Activated T-helper 1 cell treated with anti-CD3 and anti-CD28 coated beads, Interleukin-12 subunit alpha, Interleukin-12 subunit beta, Interleukin-2, Interleukin-4 antibody, amounts not matched to agents 30 ng/mL and 10 ng/mL and 1 ng/mL, durations not matched to agents 14 hours and 24 hours and 36 hours (primary cell): ENCODE measurements at regions of chr11 and their contacts with region 1.

Region 1: DNA sequence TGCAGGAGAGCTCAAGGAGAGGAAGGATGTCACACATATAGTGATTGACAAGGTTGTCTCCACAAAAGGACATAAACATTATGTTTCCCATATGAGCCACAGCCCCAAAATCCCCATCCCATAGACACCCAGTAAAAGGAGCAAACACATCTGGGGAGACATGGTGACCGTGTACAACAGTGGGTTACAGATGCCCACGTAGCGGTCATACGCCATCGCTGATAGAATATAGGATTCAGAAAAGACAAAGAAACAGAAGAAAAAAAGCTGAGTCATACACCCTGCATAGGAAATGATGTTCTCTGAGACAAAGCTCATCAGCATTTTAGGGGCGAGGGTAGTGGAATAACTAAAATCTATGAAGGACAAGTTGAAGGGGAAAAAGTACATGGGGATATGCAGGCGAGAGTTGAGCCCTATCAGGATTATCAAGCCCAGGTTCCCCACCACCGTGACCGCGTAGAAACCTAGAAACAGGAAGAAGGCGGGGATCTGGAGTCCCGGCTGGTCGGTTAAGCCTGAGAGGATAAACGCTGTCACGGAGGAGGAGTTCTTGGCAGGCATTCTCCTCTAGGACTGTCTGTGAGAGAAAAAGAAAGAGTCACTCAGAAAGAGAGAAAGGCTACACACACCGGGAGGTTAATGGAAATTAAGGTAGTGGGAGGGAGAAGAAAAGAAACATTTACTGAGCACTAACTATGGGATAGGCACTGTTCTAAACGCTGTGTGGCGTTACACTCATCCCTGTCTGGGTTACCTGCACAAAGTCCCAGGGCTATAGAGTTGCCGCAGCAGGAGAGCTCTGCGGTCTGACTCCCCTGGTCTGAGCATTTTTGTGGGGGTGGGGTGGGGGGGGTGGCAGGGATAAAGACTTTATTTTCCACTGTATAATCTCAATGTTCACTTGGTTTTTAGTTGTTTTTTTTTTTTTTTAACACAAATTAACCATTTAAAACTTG is 36.1 kb upstream of the OR8B8 start:
- DNase-seq: no peak
- H3K4me3 Mint-ChIP-seq: peak overlapping the region; percentile 70
- H3K27ac Mint-ChIP-seq: peak overlapping the region; percentile 41
- H3K4me1 Mint-ChIP-seq: peaks cover 11% of the 10 kb centered on the region
- H3K27me3 Mint-ChIP-seq: peaks cover 8% of the 10 kb centered on the region

Region 2: GRCh38 chr11:124409906-124410305 is 71.7 kb before region 1 on chr11:
- intact Hi-C with region 1: loop called (anchors 5 kb)
- DNase-seq: no peak
- H3K4me3 Mint-ChIP-seq: no peak overlapping the region
- H3K27ac Mint-ChIP-seq: no peak overlapping the region
- H3K4me1 Mint-ChIP-seq: no peaks in the 10 kb centered on the region
- H3K27me3 Mint-ChIP-seq: peaks cover 3% of the 10 kb centered on the region